ENCODE measurements at regions of chr1 and their contacts with region 1.

Region 1: DNA sequence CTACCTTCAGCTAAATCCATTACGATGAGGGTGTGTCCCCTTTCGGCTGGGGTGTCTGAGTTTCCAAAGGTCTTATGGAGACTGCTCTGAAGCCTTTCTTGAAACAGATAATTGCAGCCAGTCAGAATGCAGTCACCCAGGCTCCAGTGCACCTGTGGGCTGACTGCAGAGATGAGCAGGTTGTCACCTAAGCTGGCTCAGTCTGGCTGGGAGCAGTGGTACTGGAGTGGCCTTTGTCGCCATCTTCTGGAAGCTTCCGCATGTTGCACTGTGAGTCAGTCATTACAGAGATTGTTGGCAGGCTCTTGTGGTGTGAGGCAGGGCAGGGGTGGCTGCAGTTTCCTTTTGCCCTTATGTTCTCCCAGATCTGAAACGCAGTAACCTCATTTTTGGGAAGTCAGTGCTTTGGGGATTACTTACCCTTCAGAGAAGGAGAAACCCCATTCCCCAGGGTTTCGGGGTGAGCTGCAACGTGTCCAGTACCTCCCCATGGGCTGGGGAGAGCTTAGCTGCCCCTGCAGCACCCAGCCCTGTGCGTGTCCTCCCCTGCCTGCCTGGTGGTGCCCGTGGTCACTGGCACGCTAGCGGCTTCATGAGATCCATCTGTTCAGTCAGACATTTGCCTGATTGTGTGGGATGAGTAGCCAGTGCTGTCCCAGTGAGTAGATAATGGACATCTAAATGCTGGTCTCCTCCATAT is 48.0 kb downstream of the SMYD2 start:
- DNase-seq: peak; percentile 77 to 84
- H3K4me3 ChIP-seq: no peak overlapping the region
- H3K27ac ChIP-seq: no peak overlapping the region
- H3K4me1 ChIP-seq: peaks cover 0 to 6% (median 2%) of the 10 kb centered on the region in 4 donors
- H3K27me3 ChIP-seq: no peaks in the 10 kb centered on the region
- CTCF ChIP-seq: peak; percentile 92

Region 2: DNA sequence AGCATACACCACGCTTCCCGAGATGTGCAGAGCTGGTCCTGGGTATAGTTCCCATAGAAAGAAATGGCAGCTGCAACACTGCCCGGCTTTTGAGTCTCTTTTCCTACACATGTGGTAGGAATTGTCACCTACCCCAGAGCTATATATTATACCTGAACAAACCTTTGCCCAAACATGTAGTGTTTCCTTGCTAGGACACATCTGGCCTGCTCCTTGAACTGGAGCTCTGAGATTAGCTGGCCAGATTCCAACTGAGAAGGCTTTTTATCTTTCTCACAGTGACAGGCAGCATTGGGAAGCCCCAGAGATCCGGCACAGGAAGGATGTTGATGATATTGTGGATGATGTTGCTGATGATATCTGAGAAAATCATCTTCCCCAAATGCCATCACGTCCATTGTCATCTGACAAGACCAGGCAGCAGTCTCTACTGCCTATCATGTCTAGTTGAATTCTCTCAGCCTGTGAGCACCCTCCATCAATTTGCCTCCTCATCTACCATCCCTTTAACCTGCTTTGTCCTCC is 163.0 kb before region 1 on chr1:
- intact Hi-C with region 1: no loop called
- DNase-seq: no peak
- H3K4me3 ChIP-seq: no peak overlapping the region
- H3K27ac ChIP-seq: no peak overlapping the region
- H3K4me1 ChIP-seq: no peaks in the 10 kb centered on the region
- H3K27me3 ChIP-seq: peaks cover 0 to 8% of the 10 kb centered on the region in 2 donors
- CTCF ChIP-seq: no peak

Region 3: GRCh38 chr1:214216774-214217173 is 112.1 kb before region 1 on chr1:
- intact Hi-C with region 1: loop called (anchors 5 kb)
- DNase-seq: no peak
- H3K4me3 ChIP-seq: no peak overlapping the region
- H3K27ac ChIP-seq: no peak overlapping the region
- H3K4me1 ChIP-seq: no peaks in the 10 kb centered on the region
- H3K27me3 ChIP-seq: peaks cover 0 to 24% of the 10 kb centered on the region in 2 donors
- CTCF ChIP-seq: no peak

Region 4: DNA sequence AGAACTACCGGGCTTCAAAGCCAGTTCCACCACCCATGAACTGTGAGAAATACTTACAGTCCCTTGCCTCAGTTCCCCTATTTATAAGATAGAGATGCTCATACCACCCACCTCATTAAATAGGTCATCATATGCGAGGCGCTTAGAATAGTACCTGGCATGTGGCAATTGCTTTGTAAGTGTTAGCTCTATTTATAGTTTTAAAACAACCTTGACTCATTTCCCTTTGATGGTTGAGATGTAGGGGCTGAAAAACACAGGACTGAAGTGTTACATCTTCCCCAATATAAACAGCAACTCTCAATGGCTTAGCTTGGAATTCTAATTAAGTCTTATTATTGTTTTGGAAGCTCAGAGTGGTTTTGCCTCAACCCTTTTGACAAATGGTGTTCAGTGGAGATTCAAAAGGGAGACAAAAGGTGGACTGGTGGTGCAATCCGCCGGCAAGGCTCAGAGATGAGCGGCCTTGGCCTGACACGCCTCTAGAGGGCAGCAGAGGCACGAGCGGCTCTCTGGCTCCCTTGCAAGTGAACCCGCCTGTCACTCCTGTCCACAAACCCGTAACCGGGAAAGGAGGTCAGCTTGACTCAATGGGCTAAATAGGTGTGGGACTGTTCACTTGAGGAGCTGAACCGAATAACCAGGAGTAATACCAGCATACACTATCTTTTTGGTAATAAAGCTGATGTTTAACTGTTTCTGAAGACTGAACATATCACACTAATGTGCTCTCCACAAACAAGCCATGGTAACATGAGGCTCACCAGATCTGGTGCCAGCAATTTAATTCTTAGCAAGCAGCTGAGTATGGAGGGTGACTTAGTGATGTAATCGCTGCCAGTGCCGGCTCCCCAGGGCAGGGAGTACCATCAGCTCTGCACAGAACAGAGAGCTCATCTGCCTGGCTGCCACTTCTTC is 67.5 kb before region 1 on chr1:
- intact Hi-C with region 1: loop called (anchors 5 kb)
- DNase-seq: peak; percentile 74 to 86
- H3K4me3 ChIP-seq: no peak overlapping the region
- H3K27ac ChIP-seq: no peak overlapping the region
- H3K4me1 ChIP-seq: peaks cover 0 to 4% (median 0%) of the 10 kb centered on the region in 4 donors
- H3K27me3 ChIP-seq: peaks cover 0 to 38% of the 10 kb centered on the region in 2 donors
- CTCF ChIP-seq: peak; percentile 86 to 97

Region 5: DNA sequence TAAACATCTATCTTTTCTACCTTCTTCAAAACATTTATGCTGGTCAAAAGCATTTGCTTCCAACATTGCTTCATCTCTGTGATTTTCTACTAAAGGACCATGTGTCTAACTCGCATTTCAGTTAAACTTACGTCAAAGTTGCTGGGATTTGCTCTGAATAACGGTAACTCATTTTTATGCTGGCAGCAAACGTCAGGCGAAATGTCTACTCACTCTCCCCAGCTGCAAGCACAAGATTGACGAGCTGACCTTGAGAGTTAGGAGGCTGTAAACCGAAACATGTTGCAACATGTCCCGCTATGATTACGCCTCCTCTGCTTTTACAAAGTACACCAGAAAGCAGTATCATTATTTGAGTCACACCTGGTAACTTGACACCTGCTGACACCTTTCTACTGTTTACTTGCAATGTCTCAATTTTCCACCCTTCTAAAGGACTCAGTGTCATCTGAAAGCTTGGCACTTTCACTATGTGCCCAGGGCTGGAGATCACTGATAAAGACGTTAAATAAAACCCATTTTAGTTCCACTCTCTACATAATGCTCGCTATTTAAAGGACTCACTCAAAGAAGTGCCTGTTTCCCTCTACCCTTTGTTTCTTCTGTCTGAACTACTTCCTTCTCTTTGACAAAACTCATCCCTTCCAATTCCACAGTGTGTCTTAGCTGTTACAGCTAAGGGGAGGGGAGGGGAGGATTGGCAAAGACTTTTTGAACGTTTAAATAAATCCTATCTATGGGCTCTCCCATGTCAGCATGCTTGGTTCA is 110.6 kb after region 1 on chr1:
- intact Hi-C with region 1: no loop called
- DNase-seq: no peak
- H3K4me3 ChIP-seq: no peak overlapping the region
- H3K27ac ChIP-seq: peak overlapping the region in 1 of 2 donors; percentile 3
- H3K4me1 ChIP-seq: peaks cover 0 to 19% (median 10%) of the 10 kb centered on the region in 4 donors
- H3K27me3 ChIP-seq: no peaks in the 10 kb centered on the region
- CTCF ChIP-seq: no peak

Region 6: GRCh38 chr1:214525535-214526019 is 196.7 kb after region 1 on chr1:
- intact Hi-C with region 1: no loop called
- DNase-seq: no peak
- H3K4me3 ChIP-seq: no peak overlapping the region
- H3K27ac ChIP-seq: no peak overlapping the region
- H3K4me1 ChIP-seq: peaks cover 0 to 35% (median 14%) of the 10 kb centered on the region in 4 donors
- H3K27me3 ChIP-seq: no peaks in the 10 kb centered on the region
- CTCF ChIP-seq: no peak

Region 7: GRCh38 chr1:214584805-214585766 is 256.2 kb after region 1 on chr1:
- intact Hi-C with region 1: loop called (anchors 5 kb)
- DNase-seq: no peak
- H3K4me3 ChIP-seq: no peak overlapping the region
- H3K27ac ChIP-seq: no peak overlapping the region
- H3K4me1 ChIP-seq: peaks cover 0 to 7% (median 2%) of the 10 kb centered on the region in 4 donors
- H3K27me3 ChIP-seq: no peaks in the 10 kb centered on the region
- CTCF ChIP-seq: peak; percentile 62 to 80